Right ventricle myocardium inferior (tissue), 1 donor: ENCODE measurements at regions of chr13 and their contacts with region 1.

Region 1: GRCh38 chr13:45396533-45397095 is 21.6 kb downstream of the SLC25A30 start:
- DNase-seq: no peak
- ATAC-seq: no peak

Region 2: GRCh38 chr13:45356966-45357672 is 39.5 kb before region 1 on chr13:
- intact Hi-C with region 1: no loop called
- DNase-seq: no peak
- ATAC-seq: no peak

Region 3: DNA sequence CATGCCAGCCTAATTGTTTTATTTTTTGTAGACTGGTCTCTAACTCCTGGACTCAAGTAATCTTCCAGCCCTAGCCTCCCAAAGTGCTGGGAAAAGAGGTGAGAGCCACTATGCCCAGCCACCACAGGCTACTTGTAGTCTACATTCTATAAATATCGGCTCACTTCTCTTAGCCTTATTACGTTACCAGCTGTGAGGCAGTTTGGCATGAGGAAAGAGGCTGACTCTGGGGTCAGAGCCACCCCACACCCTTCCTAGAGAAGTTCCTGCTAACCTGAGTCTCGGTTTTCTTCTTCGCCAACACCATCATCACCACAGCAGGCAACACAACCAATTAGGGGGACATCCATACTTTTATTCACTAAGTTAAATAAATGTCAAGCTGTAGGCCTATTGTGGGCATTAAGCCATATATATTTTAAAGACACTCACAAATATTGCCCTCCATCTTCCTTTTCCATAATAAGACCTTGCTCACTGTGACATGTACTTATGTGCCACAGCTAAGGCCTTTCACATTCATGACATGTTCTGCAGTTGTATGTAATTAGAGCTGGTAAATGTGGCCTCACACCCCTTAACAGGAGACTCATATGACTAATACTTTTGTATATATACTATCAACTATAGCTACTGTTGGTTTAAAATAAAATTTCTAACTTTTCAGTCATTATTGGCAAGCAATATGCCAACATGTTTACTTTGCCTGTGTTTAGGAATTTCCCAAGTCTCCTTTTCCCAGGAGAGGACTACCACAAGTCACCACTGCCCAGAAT is 15.8 kb after region 1 on chr13:
- intact Hi-C with region 1: loop called (anchors 2 kb)
- DNase-seq: no peak
- ATAC-seq: peak; percentile 54

Region 4: GRCh38 chr13:45464687-45465453 is 68.3 kb after region 1 on chr13 and contains the start of gene COG3:
- intact Hi-C with region 1: no loop called
- DNase-seq: peak; percentile 97
- ATAC-seq: peak; percentile 99
- total RNA-seq, gene COG3: 12.3 TPM

Region 5: DNA sequence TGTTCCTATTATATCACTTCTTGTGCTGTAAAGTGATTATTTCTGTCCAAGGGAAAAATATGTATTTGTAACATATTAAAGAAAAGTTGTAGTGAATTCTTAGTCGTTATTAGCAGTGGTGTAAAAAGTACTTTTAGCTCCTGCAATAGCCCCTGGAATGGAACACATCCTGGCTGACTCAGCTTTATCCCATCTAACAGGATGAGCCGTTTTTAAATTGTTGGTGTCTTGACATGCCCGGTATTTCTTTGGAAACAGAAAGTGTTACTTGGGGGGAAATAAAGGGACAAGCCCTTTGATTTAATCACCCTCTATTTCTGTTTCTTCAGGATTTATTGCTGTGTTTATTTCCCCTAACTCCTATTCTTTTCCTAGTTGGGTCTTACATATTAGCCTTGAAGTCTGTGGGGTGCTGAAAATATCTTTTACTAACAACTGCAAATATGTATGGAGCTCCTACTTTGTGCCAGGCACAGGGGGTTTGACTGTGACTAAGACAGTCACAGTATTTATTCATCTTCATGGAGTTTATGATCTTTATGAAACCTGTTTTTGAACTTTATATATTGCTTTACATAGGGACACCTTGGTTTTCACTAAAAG is 86.1 kb after region 1 on chr13:
- intact Hi-C with region 1: loop called (anchors 5 kb)
- DNase-seq: no peak
- ATAC-seq: no peak